ENCODE measurements at regions of chr12 and their contacts with region 1.

Region 1: DNA sequence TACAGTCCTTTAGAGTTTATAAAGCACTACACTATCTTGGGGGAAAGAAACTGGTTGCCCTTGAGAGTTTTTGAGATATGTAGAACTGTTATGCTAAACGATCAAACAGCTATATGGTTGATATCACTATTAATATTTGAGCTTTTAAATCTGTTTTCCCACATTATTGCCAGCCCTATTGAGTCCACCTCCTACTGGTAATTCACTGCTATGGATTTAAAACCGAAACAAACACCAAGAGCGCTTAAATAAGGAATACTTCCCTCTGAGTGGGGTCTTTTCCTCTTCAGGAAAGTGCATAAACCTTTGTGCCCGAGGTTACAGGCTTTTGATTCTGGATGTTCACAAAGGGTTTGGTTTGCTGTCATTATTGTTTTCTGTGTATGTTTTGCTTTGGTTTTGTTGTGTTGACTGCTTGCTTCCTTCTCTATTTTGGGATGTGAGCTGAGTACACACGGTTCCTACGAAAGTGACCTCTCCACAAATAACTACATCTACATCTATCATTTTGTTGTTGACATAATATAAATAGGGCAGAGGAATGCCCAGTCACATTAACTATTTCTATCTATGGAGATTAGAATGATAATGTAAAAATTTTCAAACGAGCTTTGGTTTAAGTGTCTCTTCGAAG is 44.8 kb downstream of the LGR5 start:
- DNase-seq: no peak
- ATAC-seq: peak; percentile 76 to 94 (median 91)
- H3K4me3 ChIP-seq: peak overlapping the region; percentile 52
- H3K27ac ChIP-seq: peak overlapping the region; percentile 75
- H3K4me1 ChIP-seq: peaks cover 8% of the 10 kb centered on the region
- H3K27me3 ChIP-seq: no peaks in the 10 kb centered on the region
- CTCF ChIP-seq: peak; percentile 13

Region 2: DNA sequence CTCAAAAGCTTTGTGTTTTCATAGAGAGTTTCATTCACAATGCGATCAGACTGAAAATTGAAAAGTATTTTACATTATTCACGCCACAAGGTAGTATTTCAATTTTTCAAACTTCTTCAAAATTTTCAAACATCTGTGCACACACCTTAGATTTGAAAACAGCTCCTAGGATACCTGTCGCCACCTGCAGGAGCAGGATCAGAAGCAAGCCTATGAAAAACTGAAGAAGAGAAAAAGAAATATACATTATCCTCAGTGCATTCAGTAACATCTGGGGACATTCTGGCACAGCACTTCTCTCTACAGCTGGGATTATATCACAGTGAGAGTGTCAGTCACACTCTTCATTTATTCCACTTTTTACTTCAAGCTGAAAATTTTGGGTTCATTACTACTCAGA is 346.4 kb before region 1 on chr12:
- intact Hi-C with region 1: no loop called
- DNase-seq: no peak
- ATAC-seq: no peak
- H3K4me3 ChIP-seq: no peak overlapping the region
- H3K27ac ChIP-seq: no peak overlapping the region
- H3K4me1 ChIP-seq: peaks cover 19% of the 10 kb centered on the region
- H3K27me3 ChIP-seq: no peaks in the 10 kb centered on the region
- CTCF ChIP-seq: no peak

Region 3: GRCh38 chr12:71439362-71440314 is 44.8 kb before region 1 on chr12 and contains the start of gene LGR5:
- intact Hi-C with region 1: loop called in 1 of 2 experiments (anchors 5 kb)
- DNase-seq: peak; percentile 36 to 69
- ATAC-seq: peak; percentile 66 to 78 (median 75)
- H3K4me3 ChIP-seq: peak within 1 kb of the TSS; percentile 76
- H3K27ac ChIP-seq: peak within 1 kb of the TSS; percentile 74
- H3K4me1 ChIP-seq: no peaks in the 10 kb centered on the region
- H3K27me3 ChIP-seq: peaks cover 0 to 31% (median 0%) of the 10 kb centered on the region in 3 donors
- CTCF ChIP-seq: no peak
- total RNA-seq, gene LGR5: 1.7 to 6.4 (median 4.8) TPM

Region 4: GRCh38 chr12:71447691-71448132 is 36.7 kb before region 1 on chr12:
- intact Hi-C with region 1: loop called (anchors 5 kb)
- DNase-seq: no peak
- ATAC-seq: peak in 2 of 4 donors; percentile 48 to 60
- H3K4me3 ChIP-seq: no peak overlapping the region
- H3K27ac ChIP-seq: peak overlapping the region; percentile 11
- H3K4me1 ChIP-seq: no peaks in the 10 kb centered on the region
- H3K27me3 ChIP-seq: peaks cover 0 to 2% (median 0%) of the 10 kb centered on the region in 3 donors
- CTCF ChIP-seq: no peak

Region 5: GRCh38 chr12:71524626-71525025 is 40.2 kb after region 1 on chr12:
- intact Hi-C with region 1: no loop called
- DNase-seq: no peak
- ATAC-seq: no peak
- H3K4me3 ChIP-seq: no peak overlapping the region
- H3K27ac ChIP-seq: no peak overlapping the region
- H3K4me1 ChIP-seq: no peaks in the 10 kb centered on the region
- H3K27me3 ChIP-seq: no peaks in the 10 kb centered on the region
- CTCF ChIP-seq: no peak